Pancreas (tissue), 10 donors: ENCODE measurements at regions of chr4 and their contacts with region 1.

Region 1: GRCh38 chr4:150874338-150875226 is 140.5 kb downstream of the LRBA start:
- DNase-seq: no peak
- ATAC-seq: peak in 3 of 4 donors; percentile 14 to 48 (median 38)
- H3K4me3 ChIP-seq: no peak overlapping the region
- H3K27ac ChIP-seq: no peak overlapping the region
- H3K4me1 ChIP-seq: no peaks in the 10 kb centered on the region
- H3K27me3 ChIP-seq: no peaks in the 10 kb centered on the region
- CTCF ChIP-seq: no peak

Region 2: DNA sequence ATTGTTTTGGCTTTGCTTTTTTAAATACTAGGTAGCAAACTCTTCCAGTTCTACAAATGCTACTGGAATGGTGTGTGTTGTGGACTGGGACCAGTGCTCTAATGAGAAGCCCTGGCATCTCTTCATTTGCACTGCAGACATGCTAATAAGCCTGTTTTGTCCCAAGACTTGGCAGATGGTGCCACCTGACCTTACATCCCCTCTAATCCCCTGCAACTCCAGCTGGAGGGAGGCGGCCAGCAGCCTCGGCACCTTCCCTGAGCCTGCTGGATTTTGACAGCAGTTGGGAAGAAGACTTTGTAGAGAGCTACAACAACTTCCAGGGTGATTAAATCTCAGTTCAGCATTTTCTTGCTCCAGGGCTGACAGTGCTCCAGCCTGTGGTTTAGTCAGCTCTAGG is 596.4 kb before region 1 on chr4:
- intact Hi-C with region 1: loop called in 1 of 3 experiments (anchors 10 kb)
- DNase-seq: no peak
- ATAC-seq: no peak
- H3K4me3 ChIP-seq: no peak overlapping the region
- H3K27ac ChIP-seq: no peak overlapping the region
- H3K4me1 ChIP-seq: no peaks in the 10 kb centered on the region
- H3K27me3 ChIP-seq: no peaks in the 10 kb centered on the region
- CTCF ChIP-seq: no peak